ENCODE measurements at regions of chr17 and their contacts with region 1.

Region 1: GRCh38 chr17:46139432-46140210 is 53.6 kb downstream of the KANSL1 start:
- DNase-seq: no peak
- ATAC-seq: peak in 2 of 8 donors; percentile 7 to 41
- H3K4me3 ChIP-seq: no peak overlapping the region
- H3K27ac ChIP-seq: peak overlapping the region in 1 of 10 donors; percentile 27
- H3K4me1 ChIP-seq: peaks cover 4 to 97% (median 85%) of the 10 kb centered on the region in 9 donors
- H3K27me3 ChIP-seq: no peaks in the 10 kb centered on the region
- CTCF ChIP-seq: no peak

Region 2: DNA sequence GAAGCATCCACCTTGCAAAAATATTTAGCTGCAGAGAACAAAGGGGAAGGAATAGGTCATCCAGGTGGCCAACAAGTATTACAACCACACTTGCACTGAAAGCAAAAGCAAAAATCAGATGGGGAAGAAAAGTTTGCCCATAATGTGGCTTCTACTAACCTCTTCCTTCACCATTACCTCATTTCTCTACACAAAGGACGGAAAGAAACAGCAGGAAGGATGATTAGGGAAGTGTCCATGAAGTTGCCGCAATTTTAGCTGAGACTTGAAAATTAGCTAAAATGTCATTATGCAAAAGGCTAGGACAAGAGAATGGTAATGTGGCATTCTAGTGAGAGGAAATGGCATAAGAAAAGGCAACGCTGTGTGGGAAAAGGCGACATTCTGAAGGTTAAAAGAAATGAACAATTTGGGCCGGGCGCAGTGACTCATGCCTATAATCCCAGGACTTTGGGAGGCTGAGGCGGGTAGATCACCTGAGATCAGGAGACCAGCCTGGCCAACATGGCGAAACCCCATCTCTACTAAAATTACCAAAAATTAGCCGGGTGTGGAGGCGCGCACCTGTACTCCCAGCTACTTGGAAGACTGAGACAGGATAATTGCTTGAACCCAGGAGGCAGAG is 39.9 kb after region 1 on chr17:
- intact Hi-C with region 1: loop called in 2 of 10 experiments (anchors 5 to 10 kb)
- DNase-seq: no peak
- ATAC-seq: peak in 4 of 8 donors; percentile 20 to 55 (median 37)
- H3K4me3 ChIP-seq: no peak overlapping the region
- H3K27ac ChIP-seq: peak overlapping the region in 2 of 10 donors; percentile 6 to 69
- H3K4me1 ChIP-seq: peaks cover 10 to 97% (median 81%) of the 10 kb centered on the region in 9 donors
- H3K27me3 ChIP-seq: no peaks in the 10 kb centered on the region
- CTCF ChIP-seq: no peak